Stomach (tissue), 19 donors: ENCODE measurements at regions of chr9 and their contacts with region 1.

Region 1: GRCh38 chr9:95127249-95128176 is 190.0 kb downstream of the FANCC start:
- DNase-seq: peak; percentile 92 to 95
- H3K4me3 ChIP-seq: peak overlapping the region; percentile 27 to 41 (median 34)
- H3K27ac ChIP-seq: peak overlapping the region in 2 of 5 donors; percentile 2 to 80
- H3K4me1 ChIP-seq: peaks cover 8 to 65% (median 41%) of the 10 kb centered on the region in 4 donors
- H3K27me3 ChIP-seq: no peaks in the 10 kb centered on the region
- CTCF ChIP-seq: peak in 5 of 7 experiments; percentile 76 to 95 (median 94)
- EP300 ChIP-seq: no peak
- POLR2A ChIP-seq: no peak

Region 2: DNA sequence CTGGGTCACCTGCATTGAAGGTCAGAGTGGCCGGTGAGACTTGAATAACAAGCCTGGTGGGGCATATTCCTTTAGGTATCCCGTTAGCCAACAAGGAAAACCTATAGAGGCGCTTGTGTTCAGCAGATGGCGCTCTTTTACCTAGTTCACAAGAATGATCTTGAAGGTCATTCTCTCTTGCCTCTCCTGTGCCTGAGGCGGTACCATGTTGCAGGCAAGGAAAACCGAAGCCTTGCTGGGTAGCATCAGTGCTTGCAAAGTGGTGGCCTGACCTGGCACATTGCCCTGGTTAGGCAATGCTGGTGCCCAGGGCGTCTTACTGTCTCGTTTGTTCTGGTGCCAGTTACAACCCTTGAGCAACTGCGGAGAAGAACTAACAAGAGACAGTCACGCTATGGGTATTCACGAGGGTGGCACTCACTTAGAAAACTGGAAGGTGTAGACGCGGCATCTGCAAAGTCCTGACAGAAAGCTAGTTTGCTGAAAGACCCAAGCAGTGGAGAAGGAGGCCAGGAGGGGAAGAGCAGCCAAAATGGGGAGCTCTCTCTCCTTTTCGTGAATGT is 344.3 kb before region 1 on chr9:
- intact Hi-C with region 1: loop called (anchors 10 kb)
- DNase-seq: peak; percentile 80 to 90
- H3K4me3 ChIP-seq: no peak overlapping the region
- H3K27ac ChIP-seq: peak overlapping the region in 3 of 5 donors; percentile 29 to 54 (median 47)
- H3K4me1 ChIP-seq: peaks cover 0 to 11% (median 8%) of the 10 kb centered on the region in 4 donors
- H3K27me3 ChIP-seq: no peaks in the 10 kb centered on the region
- CTCF ChIP-seq: peak in 5 of 7 experiments; percentile 40 to 79 (median 73)
- EP300 ChIP-seq: peak; percentile 12
- POLR2A ChIP-seq: no peak

Region 3: GRCh38 chr9:95189251-95190098 is 62.0 kb after region 1 on chr9:
- intact Hi-C with region 1: no loop called
- DNase-seq: peak in 1 of 2 donors; percentile 86
- H3K4me3 ChIP-seq: peak overlapping the region in 1 of 4 donors; percentile 10
- H3K27ac ChIP-seq: peak overlapping the region; percentile 14 to 74 (median 52)
- H3K4me1 ChIP-seq: peaks cover 3 to 32% (median 20%) of the 10 kb centered on the region in 4 donors
- H3K27me3 ChIP-seq: no peaks in the 10 kb centered on the region
- CTCF ChIP-seq: no peak
- EP300 ChIP-seq: no peak
- POLR2A ChIP-seq: no peak